Heart left ventricle (tissue), 16 donors: ENCODE measurements at regions of chr20 and their contacts with region 1.

Region 1: DNA sequence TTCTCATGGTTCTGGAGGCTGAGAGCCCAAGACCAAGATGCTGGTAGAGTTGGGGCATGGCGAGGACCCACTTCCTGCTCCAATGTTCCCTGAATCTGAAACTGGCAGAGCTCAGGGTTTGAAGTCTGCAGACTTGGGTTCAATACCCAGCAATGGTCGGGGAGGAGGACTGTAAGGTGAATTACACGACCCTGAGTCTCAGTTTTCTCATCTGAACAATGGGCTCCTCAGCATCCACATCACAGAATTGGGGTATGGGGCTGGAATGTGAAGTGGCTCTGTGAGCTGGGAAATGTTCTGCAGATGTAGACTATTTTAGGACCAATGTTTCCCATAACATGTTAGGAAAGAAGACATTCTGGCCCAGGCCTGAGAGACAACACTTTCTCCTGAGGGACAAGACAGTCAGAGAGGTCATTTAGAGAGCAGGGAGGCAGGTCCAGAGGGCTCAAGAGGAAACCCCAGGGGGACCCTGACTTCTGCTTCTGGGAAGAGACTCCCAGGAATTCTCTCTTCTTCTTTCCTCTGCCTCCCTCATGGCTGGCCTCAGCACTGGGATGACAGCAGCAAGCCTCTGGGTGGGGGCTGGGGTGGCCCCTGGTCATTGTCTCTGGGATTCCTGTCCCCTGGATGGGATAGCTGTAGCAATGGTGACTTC is 141.3 kb upstream of the PMEPA1 start:
- DNase-seq: peak; percentile 57 to 77 (median 72)
- ATAC-seq: peak; percentile 53 to 70 (median 63)
- H3K4me3 ChIP-seq: no peak overlapping the region
- H3K27ac ChIP-seq: peak overlapping the region in 1 of 12 donors; percentile 30
- H3K4me1 ChIP-seq: peaks cover 0 to 6% (median 0%) of the 10 kb centered on the region in 12 donors
- H3K27me3 ChIP-seq: no peaks in the 10 kb centered on the region
- CTCF ChIP-seq: no peak
- POLR2A ChIP-seq: no peak

Region 2: GRCh38 chr20:57947421-57948179 is 96.4 kb after region 1 on chr20:
- intact Hi-C with region 1: loop called in 1 of 10 experiments (anchors 5 kb)
- DNase-seq: peak in 3 of 5 donors; percentile 46 to 66 (median 46)
- ATAC-seq: peak; percentile 43 to 69 (median 60)
- H3K4me3 ChIP-seq: no peak overlapping the region
- H3K27ac ChIP-seq: peak overlapping the region in 5 of 12 donors; percentile 27 to 42 (median 41)
- H3K4me1 ChIP-seq: peaks cover 0 to 12% (median 0%) of the 10 kb centered on the region in 12 donors
- H3K27me3 ChIP-seq: peaks cover 0 to under 1% (median 0%) of the 10 kb centered on the region in 9 donors
- CTCF ChIP-seq: peak in 1 of 12 donors; percentile 6
- POLR2A ChIP-seq: no peak